Endothelial cell of umbilical vein (primary cell): ENCODE measurements at regions of chr6 and their contacts with region 1.

Region 1: DNA sequence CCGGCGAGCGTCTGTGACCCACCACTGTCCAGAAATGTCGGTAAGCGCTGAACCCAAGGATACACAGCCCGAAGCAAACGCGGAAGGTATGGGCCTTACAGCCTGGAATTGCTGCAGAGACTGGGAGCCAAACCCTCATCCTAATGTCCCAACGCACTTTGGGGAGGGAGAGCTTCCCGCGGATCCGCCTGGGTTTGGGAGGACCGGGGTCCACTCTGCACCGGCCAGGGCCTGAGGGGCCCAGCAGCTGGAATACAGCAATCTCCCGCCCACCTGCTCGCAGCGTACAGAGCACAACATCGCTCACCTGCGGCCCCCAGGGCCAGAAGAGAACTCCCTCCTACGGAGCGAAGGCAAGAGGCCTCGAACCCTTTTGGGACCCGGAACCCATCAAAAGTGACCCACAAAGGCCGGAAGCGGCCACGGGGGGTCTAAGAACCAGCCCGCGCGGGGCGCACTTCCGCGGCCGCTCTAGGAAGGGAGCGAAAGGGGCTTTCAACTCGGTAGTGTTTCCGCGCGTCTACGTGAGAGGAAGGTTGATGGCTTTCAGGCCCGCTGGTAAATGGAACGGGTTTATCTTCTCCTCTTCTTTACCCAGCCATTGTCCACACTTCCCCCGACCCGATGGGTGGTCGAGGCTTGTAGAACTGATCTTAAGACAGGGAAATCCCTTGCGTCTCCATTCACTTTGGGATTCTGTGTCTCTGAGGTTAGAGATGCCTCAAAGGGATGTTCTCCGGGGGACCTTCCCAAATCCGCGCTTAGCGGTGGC is at the start of gene ZSCAN12:
- DNase-seq: peak; percentile 72
- H3K4me3 ChIP-seq: peak within 1 kb of the TSS; percentile 58 to 95 (median 94)
- H3K27ac ChIP-seq: peak within 1 kb of the TSS; percentile 60
- H3K4me1 ChIP-seq: peaks cover 16% of the 10 kb centered on the region
- H3K27me3 ChIP-seq: peaks cover 9 to 18% of the 10 kb centered on the region in 2 experiments
- CTCF ChIP-seq: peak; percentile 39 to 71
- POLR2A ChIP-seq: peak; percentile 80
- total RNA-seq, gene ZSCAN12: 4.2 and 4.4 TPM in 2 replicates

Region 2: DNA sequence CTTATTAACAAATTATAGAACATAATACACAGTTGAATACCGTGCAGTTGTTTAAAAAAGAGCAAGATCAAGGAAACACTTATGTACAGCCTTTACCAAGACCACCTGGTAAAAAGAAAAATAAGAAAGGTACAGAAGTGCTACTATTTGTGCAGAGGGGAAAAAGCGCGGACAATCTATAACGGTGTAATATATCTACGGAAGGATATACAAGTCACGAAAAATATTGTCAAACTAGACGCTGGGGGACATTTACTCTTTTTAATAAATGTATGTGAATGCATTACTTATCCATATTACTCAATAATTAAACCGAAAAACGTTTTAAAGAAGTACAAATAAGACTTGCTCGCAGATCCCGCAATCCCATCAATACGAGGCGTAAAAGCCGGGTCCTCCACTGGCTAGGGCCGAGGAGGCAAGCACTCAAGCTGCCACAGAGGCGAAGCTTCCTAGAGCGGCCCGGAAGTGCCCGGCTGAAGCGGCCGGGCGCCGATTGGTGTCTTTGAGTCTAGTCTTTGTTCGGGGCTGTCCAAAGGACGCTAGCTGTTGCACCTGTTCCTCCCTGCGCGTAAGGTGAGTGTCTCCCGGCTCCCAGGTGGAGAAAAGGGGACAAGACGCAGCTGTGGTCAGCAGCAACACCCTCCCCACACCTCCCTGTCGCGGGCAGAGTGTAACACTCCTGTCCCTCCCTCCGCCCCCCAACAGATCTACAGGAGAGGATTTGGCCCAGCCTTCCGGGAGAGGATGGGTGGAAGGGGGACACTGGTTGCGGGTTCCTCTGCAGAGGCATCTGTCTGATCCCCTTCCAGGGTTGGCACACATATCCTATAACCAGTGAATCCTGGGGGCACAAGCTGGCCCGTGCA is 275.2 kb before region 1 on chr6 and contains the start of gene ZSCAN16:
- CTCF ChIA-PET with region 1: no interaction called
- POLR2A ChIA-PET with region 1: no interaction called
- dilution Hi-C with region 1: no loop called
- intact Hi-C with region 1: loop called (anchors 1 kb)
- DNase-seq: peak; percentile 84
- H3K4me3 ChIP-seq: peak within 1 kb of the TSS; percentile 58 to 91 (median 77)
- H3K27ac ChIP-seq: peak within 1 kb of the TSS; percentile 46
- H3K4me1 ChIP-seq: peaks cover 11% of the 10 kb centered on the region
- H3K27me3 ChIP-seq: no peaks in the 10 kb centered on the region
- CTCF ChIP-seq: no peak
- POLR2A ChIP-seq: peak; percentile 92
- total RNA-seq, gene ZSCAN16: 7.7 and 8.9 TPM in 2 replicates

Region 3: GRCh38 chr6:28171271-28171670 is 228.3 kb before region 1 on chr6:
- CTCF ChIA-PET with region 1: no interaction called
- POLR2A ChIA-PET with region 1: no interaction called
- dilution Hi-C with region 1: no loop called
- intact Hi-C with region 1: no loop called
- DNase-seq: no peak
- H3K4me3 ChIP-seq: no peak overlapping the region
- H3K27ac ChIP-seq: no peak overlapping the region
- H3K4me1 ChIP-seq: no peaks in the 10 kb centered on the region
- H3K27me3 ChIP-seq: peaks cover 0 to 7% of the 10 kb centered on the region in 2 experiments
- CTCF ChIP-seq: no peak
- POLR2A ChIP-seq: no peak

Region 4: DNA sequence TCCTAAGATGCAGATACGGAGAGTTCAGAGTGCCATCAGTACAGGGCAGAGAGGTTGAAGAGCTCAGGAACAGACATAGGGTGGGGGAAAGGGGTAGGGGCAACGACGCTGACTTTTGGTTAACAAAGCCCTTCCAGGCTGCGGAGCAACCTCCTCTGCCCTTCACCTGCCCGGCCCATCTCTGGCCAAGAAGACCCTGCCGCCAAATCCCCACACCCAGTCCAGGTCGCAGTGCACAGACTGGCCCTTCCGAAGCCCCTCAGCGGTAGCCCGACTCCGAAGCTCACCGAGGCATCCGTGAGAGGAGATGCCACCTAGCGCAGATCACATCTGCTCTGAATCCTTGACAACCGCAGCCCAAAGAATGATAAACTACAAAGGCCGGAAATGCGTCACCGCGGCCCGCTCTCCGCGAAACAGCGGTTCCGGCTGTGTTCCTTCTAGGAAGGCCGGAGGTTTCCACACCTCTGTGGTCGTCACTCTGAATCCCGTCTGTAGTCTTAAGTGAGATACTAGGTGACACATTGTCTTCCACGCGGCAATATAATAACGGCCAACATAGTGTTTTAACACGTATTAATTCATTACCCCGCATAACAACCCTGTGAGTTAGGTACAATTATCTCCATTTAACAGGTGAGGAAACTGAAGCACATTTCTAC is 43.7 kb after region 1 on chr6 and contains the start of gene ZSCAN23:
- CTCF ChIA-PET with region 1: no interaction called
- POLR2A ChIA-PET with region 1: no interaction called
- dilution Hi-C with region 1: no loop called
- intact Hi-C with region 1: loop called (anchors 1 kb)
- DNase-seq: peak; percentile 76
- H3K4me3 ChIP-seq: peak within 1 kb of the TSS; percentile 58 to 79 (median 63)
- H3K27ac ChIP-seq: no peak within 1 kb of the TSS
- H3K4me1 ChIP-seq: no peaks in the 10 kb centered on the region
- H3K27me3 ChIP-seq: peaks cover 5 to 12% of the 10 kb centered on the region in 2 experiments
- CTCF ChIP-seq: no peak
- POLR2A ChIP-seq: peak; percentile 28
- total RNA-seq, gene ZSCAN23: 1.6 and 1.7 TPM in 2 replicates

Region 5: GRCh38 chr6:28542440-28543296 is 143.1 kb after region 1 on chr6:
- CTCF ChIA-PET with region 1: no interaction called
- POLR2A ChIA-PET with region 1: no interaction called
- dilution Hi-C with region 1: no loop called
- intact Hi-C with region 1: loop called (anchors 2 kb)
- DNase-seq: peak; percentile 70
- H3K4me3 ChIP-seq: no peak overlapping the region
- H3K27ac ChIP-seq: no peak overlapping the region
- H3K4me1 ChIP-seq: peaks cover 13% of the 10 kb centered on the region
- H3K27me3 ChIP-seq: peaks cover 0 to under 1% of the 10 kb centered on the region in 2 experiments
- CTCF ChIP-seq: peak in 1 of 2 donors; percentile 33
- POLR2A ChIP-seq: no peak

Region 6: DNA sequence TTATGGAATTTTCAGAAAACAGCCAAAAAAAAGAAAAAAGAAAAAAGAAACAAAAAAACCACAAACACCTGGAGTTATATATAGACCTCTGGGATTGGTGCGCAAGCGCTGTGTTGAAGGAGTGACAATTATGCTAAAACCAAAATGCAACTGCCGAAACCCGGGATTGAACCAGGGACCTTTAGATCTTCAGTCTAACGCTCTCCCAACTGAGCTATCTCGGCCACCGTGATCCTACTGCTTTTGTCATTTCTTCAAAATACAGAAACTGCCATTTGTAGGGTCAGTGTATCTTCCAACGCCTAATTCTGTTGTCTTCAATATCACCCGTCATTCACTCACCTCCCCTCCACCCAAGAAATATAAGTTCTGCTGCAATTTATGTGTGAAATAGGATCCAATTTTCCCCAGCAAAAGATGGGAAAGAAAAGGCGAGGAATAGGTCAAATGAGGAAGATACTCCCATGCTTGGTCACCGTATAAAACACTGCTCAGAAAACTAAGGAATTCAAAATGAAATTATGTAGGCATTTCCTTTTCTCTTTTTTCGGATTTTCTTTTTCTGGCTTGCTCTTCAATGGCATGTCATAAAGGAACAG is 408.2 kb after region 1 on chr6:
- CTCF ChIA-PET with region 1: no interaction called
- POLR2A ChIA-PET with region 1: no interaction called
- dilution Hi-C with region 1: no loop called
- intact Hi-C with region 1: no loop called
- DNase-seq: peak; percentile 53
- H3K4me3 ChIP-seq: peak overlapping the region in 2 of 3 experiments; percentile 30 to 36
- H3K27ac ChIP-seq: no peak overlapping the region
- H3K4me1 ChIP-seq: peaks cover 4% of the 10 kb centered on the region
- H3K27me3 ChIP-seq: peaks cover 39 to 50% of the 10 kb centered on the region in 2 experiments
- CTCF ChIP-seq: no peak
- POLR2A ChIP-seq: no peak

Region 7: DNA sequence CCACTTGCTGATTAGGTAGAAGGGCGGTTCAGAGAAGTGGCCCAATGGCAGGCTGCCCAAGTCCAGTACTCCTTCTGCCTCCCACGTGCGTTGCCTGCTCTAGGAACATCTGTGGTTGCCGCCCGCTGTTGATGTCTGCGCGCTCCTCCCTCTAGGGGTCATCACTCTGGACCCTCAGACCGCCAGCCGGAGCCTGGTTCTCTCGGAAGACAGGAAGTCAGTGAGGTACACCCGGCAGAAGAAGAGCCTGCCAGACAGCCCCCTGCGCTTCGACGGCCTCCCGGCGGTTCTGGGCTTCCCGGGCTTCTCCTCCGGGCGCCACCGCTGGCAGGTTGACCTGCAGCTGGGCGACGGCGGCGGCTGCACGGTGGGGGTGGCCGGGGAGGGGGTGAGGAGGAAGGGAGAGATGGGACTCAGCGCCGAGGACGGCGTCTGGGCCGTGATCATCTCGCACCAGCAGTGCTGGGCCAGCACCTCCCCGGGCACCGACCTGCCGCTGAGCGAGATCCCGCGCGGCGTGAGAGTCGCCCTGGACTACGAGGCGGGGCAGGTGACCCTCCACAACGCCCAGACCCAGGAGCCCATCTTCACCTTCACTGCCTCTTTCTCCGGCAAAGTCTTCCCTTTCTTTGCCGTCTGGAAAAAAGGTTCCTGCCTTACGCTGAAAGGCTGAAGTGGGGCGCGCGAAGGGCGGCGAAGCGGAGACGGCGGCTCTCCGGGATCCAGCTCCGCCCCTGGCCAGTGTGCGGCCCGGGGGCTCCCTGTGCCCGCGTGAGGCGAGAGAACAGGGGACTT is 1772.3 kb after region 1 on chr6:
- CTCF ChIA-PET with region 1: no interaction called
- POLR2A ChIA-PET with region 1: no interaction called
- dilution Hi-C with region 1: no loop called
- intact Hi-C with region 1: no loop called
- DNase-seq: no peak
- H3K4me3 ChIP-seq: no peak overlapping the region
- H3K27ac ChIP-seq: no peak overlapping the region
- H3K4me1 ChIP-seq: no peaks in the 10 kb centered on the region
- H3K27me3 ChIP-seq: peaks cover 54 to 80% of the 10 kb centered on the region in 2 experiments
- CTCF ChIP-seq: no peak
- POLR2A ChIP-seq: no peak